GM13977 (cell line): ENCODE measurements at regions of chr16 and their contacts with region 1.

Region 1: GRCh38 chr16:89217388-89218191 is at the start of gene ZNF778:
- DNase-seq: peak; percentile 97
- CTCF ChIP-seq: no peak

Region 2: DNA sequence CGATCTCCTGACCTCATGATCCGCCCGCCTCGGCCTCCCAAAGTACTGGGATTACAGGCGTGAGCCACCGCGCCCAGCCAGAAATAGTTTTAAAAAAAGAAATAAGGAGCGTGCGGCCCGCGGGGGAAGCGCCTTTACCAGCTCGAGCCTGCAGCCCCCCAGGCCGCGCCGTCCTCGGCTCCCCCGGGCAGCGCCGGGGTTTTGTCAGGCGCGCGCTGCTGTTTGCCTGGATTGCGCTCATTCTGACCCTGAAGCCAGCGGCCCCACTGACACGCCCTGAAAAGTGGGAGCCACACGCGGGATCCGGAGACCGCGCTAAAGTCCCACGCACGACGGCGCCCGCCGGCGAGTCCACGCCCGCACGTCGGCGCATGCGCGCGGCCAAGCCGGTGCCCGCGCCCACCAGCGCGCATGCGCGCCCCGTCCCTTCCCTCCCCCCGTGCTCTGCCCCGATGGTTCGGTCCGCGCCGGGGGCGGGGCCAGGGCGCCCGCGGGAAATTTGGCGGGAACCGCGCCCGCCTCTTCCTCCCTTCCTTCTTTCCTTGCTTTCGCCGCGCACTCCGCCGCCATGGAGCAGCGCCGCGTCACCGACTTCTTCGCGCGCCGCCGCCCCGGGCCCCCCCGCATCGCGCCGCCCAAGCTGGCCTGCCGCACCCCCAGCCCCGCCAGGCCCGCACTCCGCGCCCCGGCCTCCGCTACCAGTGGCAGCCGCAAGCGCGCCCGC is 414.2 kb before region 1 on chr16 and contains the start of gene CDT1:
- in situ Hi-C with region 1: loop called (anchors 10 kb)
- DNase-seq: peak; percentile 100
- CTCF ChIP-seq: no peak

Region 3: GRCh38 chr16:89442990-89443731 is 225.6 kb after region 1 on chr16:
- in situ Hi-C with region 1: no loop called
- DNase-seq: no peak
- CTCF ChIP-seq: no peak